Dendritic cell treated with granulocyte-macrophage colony-stimulating factor and Interleukin-4, amounts not matched to agents 40 ng/mL and 50 ng/mL, for 4 days (primary cell): ENCODE measurements at regions of chr16 and their contacts with region 1.

Region 1: DNA sequence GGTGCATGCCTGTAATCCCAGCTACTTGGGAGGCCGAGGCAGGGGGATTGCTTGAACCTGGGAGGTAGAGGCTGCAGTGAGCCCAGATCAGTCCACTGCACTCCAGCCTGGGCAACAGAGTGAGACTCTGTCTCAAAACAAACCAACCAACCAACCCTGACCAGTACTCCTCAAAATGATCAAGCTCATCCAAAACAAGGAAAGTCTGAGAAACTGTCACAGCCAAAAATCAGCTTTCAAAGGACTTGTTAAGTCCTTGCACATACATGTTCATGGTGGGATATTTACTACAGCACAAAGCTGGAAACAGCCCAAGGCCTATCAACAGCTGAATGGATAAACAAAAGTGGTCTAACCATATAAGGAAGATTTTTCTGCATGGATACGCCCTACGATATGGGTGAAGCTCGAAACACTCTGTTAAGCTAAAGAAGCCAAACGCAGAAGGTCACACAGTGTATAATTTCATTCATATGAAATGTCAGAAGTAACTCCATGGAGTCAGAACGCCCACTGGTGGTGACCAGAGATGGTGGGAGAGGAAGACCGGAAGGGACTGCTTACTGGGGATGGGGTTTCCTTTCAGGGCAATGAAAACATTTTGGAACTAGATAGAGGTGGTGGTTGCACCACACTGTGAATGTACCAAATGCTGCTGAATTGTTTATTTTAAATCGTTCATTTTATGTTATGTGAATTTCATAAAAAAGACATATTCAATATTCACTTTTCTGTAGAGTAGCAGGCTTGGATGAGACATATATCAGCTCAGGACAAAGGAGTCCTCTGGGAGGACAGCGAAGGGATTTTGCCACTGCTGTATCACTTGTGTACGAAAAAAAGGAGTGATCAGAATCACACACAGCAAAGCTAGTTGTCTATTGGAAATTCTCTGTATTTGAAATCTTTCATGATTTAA is 17.7 kb downstream of the CCL17 start:
- H3K4me3 Mint-ChIP-seq: no peak overlapping the region
- H3K27ac Mint-ChIP-seq: no peak overlapping the region
- H3K4me1 Mint-ChIP-seq: peaks cover 16% of the 10 kb centered on the region
- H3K27me3 Mint-ChIP-seq: peaks cover 8% of the 10 kb centered on the region

Region 2: DNA sequence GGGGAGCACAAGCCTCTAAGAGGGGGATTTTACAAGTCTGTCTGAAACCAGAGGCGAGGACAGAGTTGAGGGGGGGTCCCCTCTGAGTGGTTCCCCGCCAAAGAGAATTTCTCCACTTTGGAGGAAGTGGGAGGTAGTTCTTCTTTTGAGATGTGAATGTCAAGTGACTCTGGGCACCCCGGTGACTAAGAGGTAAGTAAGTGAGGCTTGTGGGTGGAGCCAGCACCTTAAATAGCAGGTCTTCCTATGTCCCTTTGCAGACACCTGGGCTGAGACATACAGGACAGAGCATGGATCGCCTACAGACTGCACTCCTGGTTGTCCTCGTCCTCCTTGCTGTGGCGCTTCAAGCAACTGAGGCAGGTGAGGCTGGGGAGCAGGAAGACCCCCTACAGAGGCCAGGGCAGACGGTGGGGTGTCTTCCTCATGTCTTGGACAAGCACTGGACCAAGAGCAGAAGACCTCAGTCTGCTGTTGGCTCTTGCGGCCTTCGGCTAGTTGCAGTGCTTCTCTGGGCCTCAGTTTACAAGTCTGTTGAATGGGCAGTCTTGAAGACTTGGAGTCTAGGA is 63.7 kb before region 1 on chr16 and contains the start of gene CCL22:
- intact Hi-C with region 1: no loop called
- H3K4me3 Mint-ChIP-seq: peak within 1 kb of the TSS; percentile 30
- H3K27ac Mint-ChIP-seq: peak within 1 kb of the TSS; percentile 90
- H3K4me1 Mint-ChIP-seq: peaks cover 18% of the 10 kb centered on the region
- H3K27me3 Mint-ChIP-seq: peaks cover 21% of the 10 kb centered on the region

Region 3: GRCh38 chr16:57519796-57520360 is 97.6 kb after region 1 on chr16:
- intact Hi-C with region 1: loop called (anchors 2 kb)
- H3K4me3 Mint-ChIP-seq: no peak overlapping the region
- H3K27ac Mint-ChIP-seq: no peak overlapping the region
- H3K4me1 Mint-ChIP-seq: peaks cover 19% of the 10 kb centered on the region
- H3K27me3 Mint-ChIP-seq: peaks cover 79% of the 10 kb centered on the region

Region 4: DNA sequence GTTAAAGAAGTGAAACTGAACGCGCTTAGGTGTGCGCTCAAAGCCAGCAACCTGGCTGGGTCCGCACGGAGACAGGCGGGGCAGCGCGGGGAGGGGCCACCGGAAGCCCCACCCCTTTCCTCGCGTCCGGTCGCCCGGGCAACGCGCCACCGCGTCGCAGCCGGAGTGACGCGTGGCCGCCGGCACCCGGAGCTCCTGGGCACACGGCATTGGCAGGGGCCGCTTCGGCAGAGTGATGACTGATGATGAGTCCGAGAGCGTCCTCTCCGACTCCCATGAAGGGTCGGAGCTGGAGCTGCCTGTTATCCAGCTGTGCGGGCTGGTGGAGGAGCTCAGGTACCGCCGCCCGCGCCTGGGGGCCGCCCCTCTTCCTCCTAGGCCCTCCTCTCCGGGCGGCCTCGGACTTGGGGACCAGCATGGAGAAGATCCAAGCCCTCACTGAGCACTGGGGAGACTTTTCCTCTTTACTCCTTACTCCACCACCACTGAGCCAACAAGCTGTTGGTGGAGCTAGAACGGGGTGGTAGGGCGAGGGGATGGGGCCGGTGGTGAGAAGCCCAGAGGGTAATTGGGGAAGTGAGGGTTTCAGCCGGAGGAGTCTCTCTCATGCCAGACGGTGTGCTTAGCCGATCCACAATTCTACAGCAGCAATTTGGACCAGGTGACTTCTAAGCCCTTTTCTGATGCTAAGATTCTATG is 827.6 kb after region 1 on chr16:
- intact Hi-C with region 1: no loop called
- H3K4me3 Mint-ChIP-seq: peak overlapping the region; percentile 82
- H3K27ac Mint-ChIP-seq: peak overlapping the region; percentile 62
- H3K4me1 Mint-ChIP-seq: peaks cover 14% of the 10 kb centered on the region
- H3K27me3 Mint-ChIP-seq: peaks cover 30% of the 10 kb centered on the region